IMR-90 (cell line): ENCODE measurements at regions of chr2 and their contacts with region 1.

Region 1: GRCh38 chr2:183038341-183039300 is at the start of gene NCKAP1:
- DNase-seq: peak; percentile 70
- ATAC-seq: peak; percentile 94
- H3K4me3 ChIP-seq: peak within 1 kb of the TSS; percentile 97
- H3K27ac ChIP-seq: peak within 1 kb of the TSS; percentile 99
- H3K4me1 ChIP-seq: no peaks in the 10 kb centered on the region
- H3K27me3 ChIP-seq: no peaks in the 10 kb centered on the region
- CTCF ChIP-seq: peak; percentile 86
- POLR2A ChIP-seq: no peak
- RAD21 ChIP-seq: peak; percentile 39; the same call in 1 of the 2 replicates
- total RNA-seq, gene NCKAP1: 160 and 188 TPM in 2 replicates

Region 2: GRCh38 chr2:182593394-182593975 is 445.1 kb before region 1 on chr2:
- CTCF ChIA-PET with region 1: no interaction called
- POLR2A ChIA-PET with region 1: no interaction called
- dilution Hi-C with region 1: no loop called
- in situ Hi-C with region 1: no loop called
- intact Hi-C with region 1: loop called (anchors 10 kb)
- DNase-seq: peak; percentile 90
- ATAC-seq: peak; percentile 78
- H3K4me3 ChIP-seq: no peak overlapping the region
- H3K27ac ChIP-seq: no peak overlapping the region
- H3K4me1 ChIP-seq: peaks cover 7% of the 10 kb centered on the region; the same call in 1 of the 2 replicates
- H3K27me3 ChIP-seq: no peaks in the 10 kb centered on the region
- CTCF ChIP-seq: no peak
- POLR2A ChIP-seq: no peak
- RAD21 ChIP-seq: no peak

Region 3: DNA sequence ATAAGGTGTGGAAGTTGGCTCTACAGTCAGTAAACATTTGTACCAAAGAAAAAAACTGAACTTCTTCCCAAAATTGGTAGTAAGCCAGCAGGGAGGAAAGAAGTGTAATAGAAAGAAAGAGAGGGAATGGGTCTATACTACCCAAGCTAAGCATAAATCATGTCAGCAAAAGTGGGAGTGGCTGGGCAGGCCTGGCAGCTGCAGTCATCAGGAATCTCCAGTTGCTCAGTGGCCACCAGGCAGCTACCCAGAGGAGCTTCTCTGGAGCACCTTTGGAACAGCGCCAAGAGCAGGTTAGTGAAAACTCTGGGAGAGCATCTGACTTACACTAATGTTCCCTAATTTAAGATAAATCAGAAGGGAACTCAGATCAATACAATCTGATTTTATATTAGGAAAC is 186.5 kb before region 1 on chr2:
- CTCF ChIA-PET with region 1: no interaction called
- POLR2A ChIA-PET with region 1: no interaction called
- dilution Hi-C with region 1: no loop called
- in situ Hi-C with region 1: no loop called
- intact Hi-C with region 1: no loop called
- DNase-seq: no peak
- ATAC-seq: no peak
- H3K4me3 ChIP-seq: no peak overlapping the region
- H3K27ac ChIP-seq: no peak overlapping the region
- H3K4me1 ChIP-seq: no peaks in the 10 kb centered on the region; the same call in 1 of the 2 replicates
- H3K27me3 ChIP-seq: peaks cover 1% of the 10 kb centered on the region
- CTCF ChIP-seq: no peak
- POLR2A ChIP-seq: no peak
- RAD21 ChIP-seq: no peak

Region 4: GRCh38 chr2:183078465-183079138 is 40.0 kb after region 1 on chr2 and contains the start of gene DUSP19:
- CTCF ChIA-PET with region 1: no interaction called
- POLR2A ChIA-PET with region 1: no interaction called
- dilution Hi-C with region 1: no loop called
- in situ Hi-C with region 1: no loop called
- intact Hi-C with region 1: loop called (anchors 2 kb)
- DNase-seq: peak; percentile 91
- ATAC-seq: peak; percentile 98
- H3K4me3 ChIP-seq: peak within 1 kb of the TSS; percentile 74
- H3K27ac ChIP-seq: peak within 1 kb of the TSS; percentile 62
- H3K4me1 ChIP-seq: no peaks in the 10 kb centered on the region
- H3K27me3 ChIP-seq: peaks cover 11% of the 10 kb centered on the region
- CTCF ChIP-seq: no peak
- POLR2A ChIP-seq: peak; percentile 46; the same call in 1 of the 2 replicates
- RAD21 ChIP-seq: no peak
- total RNA-seq, gene DUSP19: 1.4 and 2.5 TPM in 2 replicates

Region 5: GRCh38 chr2:183124222-183124956 is 85.8 kb after region 1 on chr2 and contains the start of gene NUP35:
- CTCF ChIA-PET with region 1: no interaction called
- POLR2A ChIA-PET with region 1: no interaction called
- dilution Hi-C with region 1: no loop called
- in situ Hi-C with region 1: no loop called
- intact Hi-C with region 1: loop called (anchors 5 kb)
- DNase-seq: peak; percentile 90
- ATAC-seq: peak; percentile 95
- H3K4me3 ChIP-seq: peak within 1 kb of the TSS; percentile 61
- H3K27ac ChIP-seq: peak within 1 kb of the TSS; percentile 77
- H3K4me1 ChIP-seq: peaks cover 4% of the 10 kb centered on the region; the same call in 1 of the 2 replicates
- H3K27me3 ChIP-seq: no peaks in the 10 kb centered on the region
- CTCF ChIP-seq: no peak
- POLR2A ChIP-seq: peak; percentile 55; the same call in 1 of the 2 replicates
- RAD21 ChIP-seq: no peak
- total RNA-seq, gene NUP35: 20.0 and 23.3 TPM in 2 replicates